Heart right ventricle (tissue), 16 donors: ENCODE measurements at regions of chr6 and their contacts with region 1.

Region 1: DNA sequence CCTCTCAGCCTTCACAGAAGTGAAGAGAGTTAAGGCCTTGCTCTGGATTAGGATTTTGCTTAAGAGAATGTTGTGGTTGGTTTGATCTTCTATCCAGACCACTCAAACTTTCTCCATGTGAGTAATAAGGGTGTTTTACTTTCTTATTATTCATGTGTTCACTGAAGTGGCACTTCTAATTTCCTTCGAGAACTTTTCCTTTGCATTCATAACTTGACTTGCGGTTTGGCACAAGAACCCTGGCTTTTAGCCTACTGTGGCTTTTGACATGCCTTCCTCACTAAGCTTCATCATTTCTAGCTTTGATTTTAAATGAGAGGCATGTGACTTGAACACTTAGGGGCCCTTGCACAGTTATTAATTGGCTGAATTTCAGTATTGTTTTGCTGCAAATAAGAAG is 166.1 kb upstream of the OPRM1 start:
- DNase-seq: no peak
- ATAC-seq: no peak
- H3K4me3 ChIP-seq: no peak overlapping the region
- H3K27ac ChIP-seq: no peak overlapping the region
- H3K4me1 ChIP-seq: no peaks in the 10 kb centered on the region
- H3K27me3 ChIP-seq: no peaks in the 10 kb centered on the region
- CTCF ChIP-seq: no peak

Region 2: GRCh38 chr6:153898361-153899059 is 25.6 kb after region 1 on chr6:
- intact Hi-C with region 1: loop called in 1 of 10 experiments (anchors 1 kb)
- DNase-seq: no peak
- ATAC-seq: no peak
- H3K4me3 ChIP-seq: no peak overlapping the region
- H3K27ac ChIP-seq: no peak overlapping the region
- H3K4me1 ChIP-seq: no peaks in the 10 kb centered on the region
- H3K27me3 ChIP-seq: no peaks in the 10 kb centered on the region
- CTCF ChIP-seq: no peak

Region 3: DNA sequence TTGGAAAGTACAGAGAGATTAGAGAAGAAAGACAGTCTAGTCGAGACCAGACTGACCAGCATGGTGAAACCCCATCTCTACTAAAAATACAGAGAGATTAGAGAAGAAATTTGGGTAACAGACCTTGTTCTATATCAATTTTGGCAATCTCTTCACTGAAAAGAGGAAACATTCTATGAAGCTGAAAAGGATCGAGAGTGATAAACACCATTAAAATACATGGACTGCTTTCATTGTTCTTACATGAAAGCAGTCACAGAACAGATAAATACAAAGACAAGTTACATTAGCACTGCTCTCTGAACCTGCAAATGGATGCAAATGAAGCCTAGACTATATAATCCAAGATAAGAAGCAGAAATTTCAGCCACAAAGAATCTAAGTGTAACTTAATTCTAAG is 157.7 kb after region 1 on chr6:
- intact Hi-C with region 1: loop called in 1 of 10 experiments (anchors 5 kb)
- DNase-seq: no peak
- ATAC-seq: no peak
- H3K4me3 ChIP-seq: no peak overlapping the region
- H3K27ac ChIP-seq: no peak overlapping the region
- H3K4me1 ChIP-seq: no peaks in the 10 kb centered on the region
- H3K27me3 ChIP-seq: peaks cover 0 to 6% (median 0%) of the 10 kb centered on the region in 7 donors
- CTCF ChIP-seq: no peak